CD4-positive, alpha-beta T cell (primary cell): ENCODE measurements at regions of chr16 and their contacts with region 1.

Region 1: GRCh38 chr16:1863681-1864460 is 8.1 kb downstream of the MEIOB start:
- DNase-seq: peak in 4 of 14 experiments; percentile 4 to 67 (median 52)
- ATAC-seq: peak; percentile 34
- H3K4me3 ChIP-seq: no peak overlapping the region
- H3K4me3 Mint-ChIP-seq: no peak overlapping the region
- H3K27ac ChIP-seq: no peak overlapping the region
- H3K27ac Mint-ChIP-seq: no peak overlapping the region
- H3K4me1 ChIP-seq: no peaks in the 10 kb centered on the region
- H3K4me1 Mint-ChIP-seq: no peaks in the 10 kb centered on the region
- H3K27me3 ChIP-seq: peaks cover 0 to 8% of the 10 kb centered on the region in 2 experiments
- H3K27me3 Mint-ChIP-seq: peaks cover 47% of the 10 kb centered on the region
- CTCF ChIP-seq: peak; percentile 71

Region 2: GRCh38 chr16:1812732-1813163 is 51.1 kb before region 1 on chr16:
- CTCF ChIA-PET with region 1: no interaction called
- POLR2A ChIA-PET with region 1: no interaction called
- intact Hi-C with region 1: no loop called
- DNase-seq: peak; percentile 27 to 76 (median 49)
- ATAC-seq: peak; percentile 98
- H3K4me3 ChIP-seq: no peak overlapping the region
- H3K4me3 Mint-ChIP-seq: no peak overlapping the region
- H3K27ac ChIP-seq: no peak overlapping the region
- H3K27ac Mint-ChIP-seq: no peak overlapping the region
- H3K4me1 ChIP-seq: peaks cover 3% of the 10 kb centered on the region
- H3K4me1 Mint-ChIP-seq: peaks cover 6% of the 10 kb centered on the region
- H3K27me3 ChIP-seq: no peaks in the 10 kb centered on the region
- H3K27me3 Mint-ChIP-seq: no peaks in the 10 kb centered on the region
- CTCF ChIP-seq: peak; percentile 58

Region 3: GRCh38 chr16:1826691-1827575 is 36.9 kb before region 1 on chr16 and contains the starts of genes FAHD1 and HAGH:
- CTCF ChIA-PET with region 1: no interaction called
- POLR2A ChIA-PET with region 1: no interaction called
- intact Hi-C with region 1: loop called in 1 of 2 experiments (anchors 2 kb)
- DNase-seq: peak; percentile 82 to 97 (median 88)
- ATAC-seq: peak; percentile 82
- H3K4me3 ChIP-seq: peak within 1 kb of the TSS; percentile 76
- H3K4me3 Mint-ChIP-seq: peak within 1 kb of the TSS; percentile 91
- H3K27ac ChIP-seq: peak within 1 kb of the TSS; percentile 72 to 77
- H3K27ac Mint-ChIP-seq: peak within 1 kb of the TSS; percentile 90
- H3K4me1 ChIP-seq: peaks cover 51% of the 10 kb centered on the region
- H3K4me1 Mint-ChIP-seq: peaks cover 37% of the 10 kb centered on the region
- H3K27me3 ChIP-seq: no peaks in the 10 kb centered on the region
- H3K27me3 Mint-ChIP-seq: no peaks in the 10 kb centered on the region
- CTCF ChIP-seq: no peak
- total RNA-seq, gene FAHD1: 4.1 to 4.5 TPM
- total RNA-seq, gene HAGH: 20.9 to 22.7 TPM

Region 4: DNA sequence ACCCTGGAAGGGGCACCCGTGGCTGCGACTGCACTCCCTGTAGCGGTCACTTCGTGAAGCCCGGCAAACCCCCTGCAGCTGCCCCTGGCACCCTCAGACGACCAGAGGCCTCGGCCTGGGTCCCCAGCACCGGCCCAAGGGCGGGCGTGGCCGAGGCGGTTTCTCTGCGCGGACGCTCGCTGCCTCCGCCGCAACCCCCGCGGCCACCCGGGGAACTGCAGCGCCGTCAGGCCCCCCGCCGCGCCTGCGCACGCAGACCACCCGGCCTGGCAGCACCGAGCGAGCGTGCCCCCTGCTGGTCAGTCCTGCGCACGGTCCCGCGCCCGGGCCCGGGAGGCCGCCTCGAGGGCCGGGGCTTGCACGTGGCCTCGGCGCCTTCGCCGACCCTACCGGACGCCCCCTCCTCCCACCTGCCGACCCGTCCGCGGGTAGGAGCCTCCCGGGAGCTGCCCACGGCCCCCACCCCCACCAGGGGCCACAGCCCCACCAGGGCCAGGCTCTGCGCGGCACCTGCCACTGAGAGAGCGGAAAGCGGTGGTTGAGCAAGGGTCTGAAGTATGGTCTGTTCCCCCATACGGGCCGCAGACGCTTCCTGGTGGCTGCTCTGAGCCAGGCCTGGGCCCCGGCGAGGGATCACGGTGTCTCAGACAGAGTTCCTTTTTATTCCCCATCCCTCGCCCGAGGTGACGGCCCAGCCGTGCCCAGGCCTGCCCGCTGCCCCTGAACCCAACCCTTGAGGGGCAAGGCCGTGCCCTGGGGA is 65.9 kb after region 1 on chr16:
- CTCF ChIA-PET with region 1: interaction called, 3 read pairs
- POLR2A ChIA-PET with region 1: no interaction called
- intact Hi-C with region 1: loop called (anchors 1 kb)
- DNase-seq: peak; percentile 79 to 96 (median 92)
- ATAC-seq: peak; percentile 100
- H3K4me3 ChIP-seq: peak overlapping the region; percentile 42
- H3K4me3 Mint-ChIP-seq: peak overlapping the region; percentile 88
- H3K27ac ChIP-seq: no peak overlapping the region
- H3K27ac Mint-ChIP-seq: no peak overlapping the region
- H3K4me1 ChIP-seq: peaks cover 11% of the 10 kb centered on the region
- H3K4me1 Mint-ChIP-seq: no peaks in the 10 kb centered on the region
- H3K27me3 ChIP-seq: peaks cover 0 to under 1% of the 10 kb centered on the region in 2 experiments
- H3K27me3 Mint-ChIP-seq: peaks cover 2% of the 10 kb centered on the region
- CTCF ChIP-seq: peak; percentile 94

Region 5: DNA sequence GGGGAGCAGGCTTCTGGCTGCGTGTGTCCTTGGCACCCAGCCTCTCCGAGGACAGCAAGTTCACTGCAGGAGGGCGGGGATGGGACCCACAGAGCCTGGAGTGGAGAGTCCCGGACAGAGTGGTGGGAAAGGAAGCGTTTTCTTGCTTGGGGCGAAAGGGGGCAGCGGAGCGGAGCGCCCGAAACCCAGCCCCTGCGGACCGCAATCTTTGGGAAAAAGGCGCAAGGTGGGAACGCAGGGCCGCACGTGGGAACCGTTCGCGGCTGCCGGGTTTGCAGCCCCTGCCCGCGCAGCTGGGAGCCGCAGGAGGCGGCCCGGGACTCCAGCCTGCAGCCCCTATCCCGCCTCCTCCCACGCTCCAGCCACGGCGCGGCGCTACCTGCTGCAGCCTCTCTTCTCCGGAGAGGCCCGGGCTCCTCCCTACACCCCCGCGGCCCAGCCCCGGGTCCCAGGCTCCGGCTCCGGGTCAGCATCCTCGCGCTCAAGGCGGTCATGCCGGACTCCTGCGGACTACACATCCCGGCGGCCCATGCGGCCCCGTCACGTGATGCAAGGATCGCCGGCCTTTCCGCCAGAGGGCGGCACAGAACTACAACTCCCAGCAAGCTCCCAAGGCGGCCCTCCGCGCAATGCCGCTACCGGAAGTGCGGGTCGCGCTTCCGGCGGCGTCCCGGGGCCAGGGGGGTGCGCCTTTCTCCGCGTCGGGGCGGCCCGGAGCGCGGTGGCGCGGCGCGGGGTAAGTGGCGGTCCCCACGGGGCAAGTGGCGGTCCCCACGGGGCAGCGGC is 183.7 kb after region 1 on chr16 and contains the starts of genes NTHL1 and TSC2:
- CTCF ChIA-PET with region 1: no interaction called
- POLR2A ChIA-PET with region 1: no interaction called
- intact Hi-C with region 1: no loop called
- DNase-seq: peak; percentile 78 to 96 (median 90)
- ATAC-seq: peak; percentile 90
- H3K4me3 ChIP-seq: peak within 1 kb of the TSS; percentile 96
- H3K4me3 Mint-ChIP-seq: peak within 1 kb of the TSS; percentile 93
- H3K27ac ChIP-seq: peak within 1 kb of the TSS in 1 of 2 donors; percentile 29
- H3K27ac Mint-ChIP-seq: peak within 1 kb of the TSS; percentile 56
- H3K4me1 ChIP-seq: peaks cover 33% of the 10 kb centered on the region
- H3K4me1 Mint-ChIP-seq: peaks cover 23% of the 10 kb centered on the region
- H3K27me3 ChIP-seq: no peaks in the 10 kb centered on the region
- H3K27me3 Mint-ChIP-seq: no peaks in the 10 kb centered on the region
- CTCF ChIP-seq: peak; percentile 57
- total RNA-seq, gene NTHL1: 2.7 to 2.9 TPM
- total RNA-seq, gene TSC2: 83.0 to 85.0 TPM

Region 6: GRCh38 chr16:2147981-2148671 is 284.3 kb after region 1 on chr16 and contains the start of gene RAB26:
- CTCF ChIA-PET with region 1: no interaction called
- POLR2A ChIA-PET with region 1: no interaction called
- intact Hi-C with region 1: loop called (anchors 5 to 10 kb)
- DNase-seq: peak in 11 of 14 experiments; percentile 39 to 82 (median 57)
- ATAC-seq: peak; percentile 87
- H3K4me3 ChIP-seq: peak within 1 kb of the TSS; percentile 51
- H3K4me3 Mint-ChIP-seq: peak within 1 kb of the TSS; percentile 42
- H3K27ac ChIP-seq: no peak within 1 kb of the TSS
- H3K27ac Mint-ChIP-seq: no peak within 1 kb of the TSS
- H3K4me1 ChIP-seq: peaks cover 53% of the 10 kb centered on the region
- H3K4me1 Mint-ChIP-seq: peaks cover 9% of the 10 kb centered on the region
- H3K27me3 ChIP-seq: no peaks in the 10 kb centered on the region
- H3K27me3 Mint-ChIP-seq: no peaks in the 10 kb centered on the region
- CTCF ChIP-seq: no peak
- total RNA-seq, gene RAB26: not detected